Left ventricle myocardium inferior (tissue), 1 donor: ENCODE measurements at regions of chr6 and their contacts with region 1.

Region 1: DNA sequence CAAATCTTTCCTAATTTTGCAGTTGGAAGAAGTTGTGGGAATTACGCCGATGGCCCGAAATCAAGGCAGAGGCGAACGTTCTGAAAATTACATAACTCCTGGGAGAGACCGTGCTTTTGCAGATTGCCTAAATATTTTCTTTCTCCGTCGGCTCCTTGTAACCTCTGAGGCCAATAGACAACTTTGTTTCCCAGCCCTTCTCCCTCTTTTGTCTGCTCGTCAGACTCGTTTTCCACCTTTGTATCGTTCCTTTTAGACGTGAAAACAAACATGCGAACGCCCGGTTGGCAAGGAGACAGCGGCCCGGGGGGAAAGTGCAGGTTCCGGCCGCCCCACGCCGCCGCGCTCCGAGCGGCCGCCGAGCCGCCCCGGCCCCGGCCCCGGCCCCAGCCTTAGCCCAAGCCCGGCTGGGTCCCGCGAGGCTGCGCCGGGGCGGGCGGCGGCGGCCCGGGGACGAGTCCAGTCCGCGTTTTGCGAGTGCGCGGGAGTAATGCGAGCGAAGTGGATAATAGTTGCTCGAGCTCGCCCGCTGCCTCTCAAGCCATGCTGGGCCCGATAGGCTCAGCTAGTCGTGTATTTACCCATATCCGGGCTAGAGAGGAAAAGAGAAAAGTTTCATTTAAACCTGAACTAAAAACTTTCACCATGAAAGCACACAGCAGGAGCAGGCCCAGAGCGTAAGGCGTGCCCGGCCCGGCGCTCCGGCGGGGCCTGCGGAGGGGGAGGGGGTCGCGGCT is at the start of gene ARID1B:
- DNase-seq: peak; percentile 85
- H3K4me3 ChIP-seq: peak within 1 kb of the TSS; percentile 83
- H3K27ac ChIP-seq: peak within 1 kb of the TSS; percentile 98
- H3K4me1 ChIP-seq: peaks cover 38% of the 10 kb centered on the region
- H3K27me3 ChIP-seq: no peaks in the 10 kb centered on the region
- CTCF ChIP-seq: no peak
- total RNA-seq, gene ARID1B: 43.4 TPM

Region 2: GRCh38 chr6:156564127-156564806 is 212.7 kb before region 1 on chr6:
- intact Hi-C with region 1: loop called (anchors 10 kb)
- DNase-seq: peak; percentile 78
- H3K4me3 ChIP-seq: peak overlapping the region; percentile 11
- H3K27ac ChIP-seq: peak overlapping the region; percentile 42
- H3K4me1 ChIP-seq: peaks cover 13% of the 10 kb centered on the region
- H3K27me3 ChIP-seq: no peaks in the 10 kb centered on the region
- CTCF ChIP-seq: peak; percentile 97

Region 3: GRCh38 chr6:156599978-156600590 is 176.9 kb before region 1 on chr6:
- intact Hi-C with region 1: no loop called
- DNase-seq: no peak
- H3K4me3 ChIP-seq: no peak overlapping the region
- H3K27ac ChIP-seq: peak overlapping the region; percentile 71
- H3K4me1 ChIP-seq: peaks cover 14% of the 10 kb centered on the region
- H3K27me3 ChIP-seq: no peaks in the 10 kb centered on the region
- CTCF ChIP-seq: no peak

Region 4: DNA sequence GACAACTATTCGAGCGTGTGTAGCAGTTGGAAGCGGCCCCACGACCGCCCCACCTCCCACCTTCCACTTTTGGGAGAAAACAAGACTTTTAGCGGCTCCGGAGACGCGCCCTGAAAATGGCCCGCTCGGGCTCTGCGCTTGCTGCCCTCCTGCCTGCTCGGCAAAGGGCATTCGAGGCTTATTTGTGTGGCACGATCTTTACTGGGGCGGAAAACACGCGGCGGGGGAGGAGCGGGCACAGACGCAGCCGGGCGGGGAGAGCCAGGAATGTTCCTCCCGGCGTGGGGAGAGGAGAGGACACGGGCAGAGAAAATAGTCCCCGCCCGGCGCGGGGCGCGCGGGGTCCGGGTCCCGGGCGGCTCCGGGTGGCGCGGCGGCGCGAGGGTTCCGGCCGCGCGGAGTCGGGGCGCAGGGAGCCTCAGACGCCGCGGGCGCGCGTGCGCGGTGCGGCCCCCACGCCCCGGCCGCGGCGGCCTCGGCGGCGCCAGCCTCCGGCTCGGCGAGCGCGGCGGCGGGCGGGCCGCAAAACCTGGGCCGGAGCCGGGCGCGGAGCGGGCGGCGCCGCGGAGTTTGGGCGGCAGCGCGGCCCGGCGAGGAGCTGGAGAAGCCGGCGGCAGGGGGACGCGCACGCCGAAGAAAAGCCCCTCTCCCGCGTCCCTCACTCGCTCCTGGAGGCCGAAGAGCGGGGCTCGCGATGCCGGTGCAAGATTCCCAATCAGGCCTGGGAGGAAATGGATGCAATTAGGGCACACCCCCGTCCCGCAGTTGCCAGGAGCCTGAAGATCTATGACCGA is 89.8 kb before region 1 on chr6:
- intact Hi-C with region 1: loop called (anchors 2 kb)
- DNase-seq: peak; percentile 93
- H3K4me3 ChIP-seq: peak overlapping the region; percentile 74
- H3K27ac ChIP-seq: peak overlapping the region; percentile 100
- H3K4me1 ChIP-seq: peaks cover 24% of the 10 kb centered on the region
- H3K27me3 ChIP-seq: no peaks in the 10 kb centered on the region
- CTCF ChIP-seq: no peak

Region 5: GRCh38 chr6:156848533-156848932 is 71.5 kb after region 1 on chr6:
- intact Hi-C with region 1: loop called (anchors 5 kb)
- DNase-seq: peak; percentile 84
- H3K4me3 ChIP-seq: peak overlapping the region; percentile 37
- H3K27ac ChIP-seq: peak overlapping the region; percentile 76
- H3K4me1 ChIP-seq: peaks cover 100% of the 10 kb centered on the region
- H3K27me3 ChIP-seq: no peaks in the 10 kb centered on the region
- CTCF ChIP-seq: no peak

Region 6: GRCh38 chr6:156953479-156954146 is 176.6 kb after region 1 on chr6:
- intact Hi-C with region 1: loop called (anchors 10 kb)
- DNase-seq: no peak
- H3K4me3 ChIP-seq: peak overlapping the region; percentile 42
- H3K27ac ChIP-seq: peak overlapping the region; percentile 83
- H3K4me1 ChIP-seq: peaks cover 94% of the 10 kb centered on the region
- H3K27me3 ChIP-seq: no peaks in the 10 kb centered on the region
- CTCF ChIP-seq: peak; percentile 63

Region 7: GRCh38 chr6:157021344-157021992 is 244.5 kb after region 1 on chr6:
- intact Hi-C with region 1: loop called (anchors 5 kb)
- DNase-seq: peak; percentile 94
- H3K4me3 ChIP-seq: peak overlapping the region; percentile 89
- H3K27ac ChIP-seq: peak overlapping the region; percentile 99
- H3K4me1 ChIP-seq: peaks cover 65% of the 10 kb centered on the region
- H3K27me3 ChIP-seq: no peaks in the 10 kb centered on the region
- CTCF ChIP-seq: peak; percentile 57